ENCODE measurements at regions of chr1 and their contacts with region 1.

Region 1: DNA sequence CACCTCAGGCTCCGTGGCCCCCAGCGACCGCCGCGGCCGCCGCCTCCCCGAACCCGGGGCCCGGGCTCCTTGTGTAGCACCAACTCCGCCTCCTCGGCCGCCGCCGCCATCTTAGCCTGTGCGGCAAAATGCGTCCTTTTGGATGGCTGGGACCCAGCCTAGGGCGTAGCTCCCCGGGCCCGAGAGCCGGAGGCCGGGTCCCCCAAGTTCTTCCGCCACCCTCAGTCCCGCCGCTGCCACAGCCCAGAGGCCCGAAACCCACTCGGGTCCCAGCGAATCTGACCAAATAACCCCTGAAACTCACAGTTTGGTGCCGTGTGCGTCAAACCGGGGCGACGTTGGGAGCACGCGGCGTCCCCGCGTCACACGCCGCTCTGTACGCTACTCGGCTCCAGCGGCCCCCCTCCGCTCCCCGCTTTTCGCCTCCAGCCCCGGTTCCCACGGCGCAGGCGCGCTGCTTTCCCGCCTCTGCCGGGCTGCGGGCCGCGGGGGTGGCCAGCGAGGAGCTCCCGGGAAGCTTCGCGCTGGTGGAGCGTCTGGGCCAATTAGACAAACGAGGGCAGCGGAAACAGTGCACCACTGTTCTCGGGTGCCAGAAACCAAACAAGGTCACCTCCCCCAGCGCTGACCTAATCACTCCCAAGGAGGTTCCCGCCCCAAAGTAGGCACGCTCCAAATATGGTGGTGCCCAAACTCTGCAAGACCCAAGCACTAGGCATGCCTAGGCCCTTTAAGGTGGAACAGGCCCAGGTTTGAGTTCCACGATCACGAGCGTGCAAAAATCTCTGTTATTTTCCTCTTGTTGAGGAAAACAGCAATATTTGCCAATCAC is at the start of gene ZNF644:
- DNase-seq: peak; percentile 80
- ATAC-seq: peak; percentile 81
- H3K4me3 Mint-ChIP-seq: peak within 1 kb of the TSS; percentile 95
- H3K27ac Mint-ChIP-seq: peak within 1 kb of the TSS; percentile 99
- H3K4me1 Mint-ChIP-seq: peaks cover 83% of the 10 kb centered on the region
- H3K27me3 Mint-ChIP-seq: no peaks in the 10 kb centered on the region
- CTCF ChIP-seq: no peak
- total RNA-seq, gene ZNF644: 78.4 and 98.4 TPM in 2 replicates

Region 2: GRCh38 chr1:89994805-89995597 is 1026.9 kb before region 1 on chr1 and contains the start of gene ZNF326:
- CTCF ChIA-PET with region 1: no interaction called
- POLR2A ChIA-PET with region 1: no interaction called
- intact Hi-C with region 1: loop called (anchors 5 kb)
- DNase-seq: peak; percentile 98
- ATAC-seq: peak; percentile 97
- H3K4me3 Mint-ChIP-seq: peak within 1 kb of the TSS; percentile 94
- H3K27ac Mint-ChIP-seq: peak within 1 kb of the TSS; percentile 88
- H3K4me1 Mint-ChIP-seq: peaks cover 32% of the 10 kb centered on the region
- H3K27me3 Mint-ChIP-seq: no peaks in the 10 kb centered on the region
- CTCF ChIP-seq: no peak
- total RNA-seq, gene ZNF326: 26.2 and 30.3 TPM in 2 replicates

Region 3: GRCh38 chr1:90964444-90965035 is 57.4 kb before region 1 on chr1:
- CTCF ChIA-PET with region 1: no interaction called
- POLR2A ChIA-PET with region 1: no interaction called
- intact Hi-C with region 1: loop called (anchors 10 kb)
- DNase-seq: no peak
- ATAC-seq: no peak
- H3K4me3 Mint-ChIP-seq: no peak overlapping the region
- H3K27ac Mint-ChIP-seq: peak overlapping the region; percentile 11
- H3K4me1 Mint-ChIP-seq: peaks cover 35% of the 10 kb centered on the region
- H3K27me3 Mint-ChIP-seq: no peaks in the 10 kb centered on the region
- CTCF ChIP-seq: no peak

Region 4: DNA sequence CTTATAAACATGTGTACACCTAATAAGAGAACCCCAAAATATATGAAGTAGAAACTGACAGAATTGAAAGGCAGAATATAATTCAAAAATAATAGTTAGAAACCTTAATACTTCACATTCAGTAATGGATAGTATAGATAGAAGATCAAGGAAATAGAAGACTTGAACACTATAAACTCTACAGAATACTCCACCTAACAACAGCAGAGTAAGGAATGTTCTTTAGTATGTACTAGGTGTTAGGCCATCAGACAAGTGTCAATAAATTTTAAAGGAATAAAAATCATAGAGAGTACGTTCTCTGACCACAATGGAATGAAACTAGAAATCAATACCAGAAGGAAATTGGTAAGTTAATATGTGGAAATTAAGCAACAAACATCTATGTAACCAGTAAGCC is 16.6 kb before region 1 on chr1:
- CTCF ChIA-PET with region 1: interaction called, 3 read pairs
- POLR2A ChIA-PET with region 1: interaction called, 17 read pairs
- intact Hi-C with region 1: loop called (anchors 2 kb)
- DNase-seq: no peak
- ATAC-seq: no peak
- H3K4me3 Mint-ChIP-seq: no peak overlapping the region
- H3K27ac Mint-ChIP-seq: no peak overlapping the region
- H3K4me1 Mint-ChIP-seq: peaks cover 78% of the 10 kb centered on the region
- H3K27me3 Mint-ChIP-seq: no peaks in the 10 kb centered on the region
- CTCF ChIP-seq: no peak

Region 5: GRCh38 chr1:91054780-91055481 is 33.0 kb after region 1 on chr1:
- CTCF ChIA-PET with region 1: interaction called, 3 read pairs
- POLR2A ChIA-PET with region 1: interaction called, 8 read pairs
- intact Hi-C with region 1: loop called (anchors 1 kb)
- DNase-seq: peak; percentile 22
- ATAC-seq: peak; percentile 84
- H3K4me3 Mint-ChIP-seq: no peak overlapping the region
- H3K27ac Mint-ChIP-seq: no peak overlapping the region
- H3K4me1 Mint-ChIP-seq: peaks cover 9% of the 10 kb centered on the region
- H3K27me3 Mint-ChIP-seq: no peaks in the 10 kb centered on the region
- CTCF ChIP-seq: no peak

Region 6: DNA sequence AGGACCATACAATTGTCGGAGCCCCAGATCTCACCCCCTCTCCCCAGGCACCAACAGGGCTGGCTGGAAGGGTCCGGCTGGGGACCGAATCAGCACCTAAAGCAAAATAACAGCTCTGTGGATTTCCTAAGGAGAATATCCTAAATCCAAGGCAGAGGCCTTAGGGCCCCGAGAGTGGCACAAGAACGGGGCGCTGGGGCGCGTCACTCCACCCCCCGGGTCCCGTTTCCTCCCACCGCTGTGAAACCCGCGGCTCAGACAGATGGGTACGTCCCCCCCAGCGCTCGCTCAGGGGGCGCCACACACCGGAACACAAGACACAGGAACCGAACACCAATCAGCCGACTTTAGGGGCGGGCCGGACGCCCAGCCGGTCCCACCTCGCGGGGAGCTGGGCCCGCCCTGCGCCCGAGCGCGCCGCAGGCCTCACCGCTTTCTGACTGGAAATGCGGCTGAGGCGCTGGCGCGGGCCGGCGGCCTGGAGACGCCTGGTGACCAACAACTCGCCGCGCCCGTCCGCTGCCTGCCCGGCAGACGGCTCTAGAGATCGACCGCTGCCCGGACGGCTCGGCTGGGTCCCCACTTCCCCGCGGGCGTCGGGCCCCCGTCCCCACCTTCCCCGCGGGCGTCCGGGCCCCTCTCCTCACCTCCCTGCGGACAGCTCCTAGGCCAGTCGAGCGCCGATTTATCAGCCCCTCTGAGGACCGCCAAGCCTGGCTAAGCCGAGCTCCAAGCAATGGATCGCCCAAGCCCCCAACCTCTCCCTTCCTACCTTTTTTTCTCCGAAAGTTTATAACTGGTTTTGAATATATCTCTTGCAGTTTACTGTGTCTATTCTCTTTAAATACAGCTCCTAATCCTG is 382.5 kb after region 1 on chr1 and contains the start of gene HFM1:
- CTCF ChIA-PET with region 1: no interaction called
- POLR2A ChIA-PET with region 1: no interaction called
- intact Hi-C with region 1: loop called (anchors 5 kb)
- DNase-seq: peak; percentile 45
- ATAC-seq: peak; percentile 97
- H3K4me3 Mint-ChIP-seq: peak within 1 kb of the TSS; percentile 80
- H3K27ac Mint-ChIP-seq: no peak within 1 kb of the TSS
- H3K4me1 Mint-ChIP-seq: peaks cover 10% of the 10 kb centered on the region
- H3K27me3 Mint-ChIP-seq: peaks cover 22% of the 10 kb centered on the region
- CTCF ChIP-seq: no peak
- total RNA-seq, gene HFM1: 0.07 and 0.29 TPM in 2 replicates

Region 7: GRCh38 chr1:92298573-92299476 is 1276.9 kb after region 1 on chr1 and contains the starts of genes GLMN and RPAP2:
- CTCF ChIA-PET with region 1: no interaction called
- POLR2A ChIA-PET with region 1: no interaction called
- intact Hi-C with region 1: loop called (anchors 10 kb)
- DNase-seq: peak; percentile 82
- ATAC-seq: peak; percentile 96
- H3K4me3 Mint-ChIP-seq: peak within 1 kb of the TSS; percentile 99
- H3K27ac Mint-ChIP-seq: peak within 1 kb of the TSS; percentile 99
- H3K4me1 Mint-ChIP-seq: peaks cover 31% of the 10 kb centered on the region
- H3K27me3 Mint-ChIP-seq: no peaks in the 10 kb centered on the region
- CTCF ChIP-seq: no peak
- total RNA-seq, gene GLMN: 11.1 and 14.7 TPM in 2 replicates
- total RNA-seq, gene RPAP2: 27.1 and 31.7 TPM in 2 replicates

Measured in activated B cell treated with CpG ODN at 0.5 μM for 24 hours (primary cell).